Calu3 (cell line): ENCODE measurements at regions of chr1 and their contacts with region 1.

Region 1: GRCh38 chr1:18956369-18957135 is at the start of gene IFFO2:
- DNase-seq: peak; percentile 98
- H3K4me3 Mint-ChIP-seq: peak within 1 kb of the TSS; percentile 77
- H3K27ac Mint-ChIP-seq: peak within 1 kb of the TSS; percentile 79
- H3K4me1 Mint-ChIP-seq: peaks cover 31% of the 10 kb centered on the region
- H3K27me3 Mint-ChIP-seq: peaks cover 12% of the 10 kb centered on the region
- CTCF ChIP-seq: no peak
- total RNA-seq, gene IFFO2: 6.6 and 13.0 TPM in 2 replicates

Region 2: GRCh38 chr1:18814425-18814824 is 142.1 kb before region 1 on chr1:
- CTCF ChIA-PET with region 1: no interaction called
- intact Hi-C with region 1: no loop called
- DNase-seq: no peak
- H3K4me3 Mint-ChIP-seq: no peak overlapping the region
- H3K27ac Mint-ChIP-seq: no peak overlapping the region
- H3K4me1 Mint-ChIP-seq: no peaks in the 10 kb centered on the region
- H3K27me3 Mint-ChIP-seq: peaks cover 90% of the 10 kb centered on the region
- CTCF ChIP-seq: no peak

Region 3: DNA sequence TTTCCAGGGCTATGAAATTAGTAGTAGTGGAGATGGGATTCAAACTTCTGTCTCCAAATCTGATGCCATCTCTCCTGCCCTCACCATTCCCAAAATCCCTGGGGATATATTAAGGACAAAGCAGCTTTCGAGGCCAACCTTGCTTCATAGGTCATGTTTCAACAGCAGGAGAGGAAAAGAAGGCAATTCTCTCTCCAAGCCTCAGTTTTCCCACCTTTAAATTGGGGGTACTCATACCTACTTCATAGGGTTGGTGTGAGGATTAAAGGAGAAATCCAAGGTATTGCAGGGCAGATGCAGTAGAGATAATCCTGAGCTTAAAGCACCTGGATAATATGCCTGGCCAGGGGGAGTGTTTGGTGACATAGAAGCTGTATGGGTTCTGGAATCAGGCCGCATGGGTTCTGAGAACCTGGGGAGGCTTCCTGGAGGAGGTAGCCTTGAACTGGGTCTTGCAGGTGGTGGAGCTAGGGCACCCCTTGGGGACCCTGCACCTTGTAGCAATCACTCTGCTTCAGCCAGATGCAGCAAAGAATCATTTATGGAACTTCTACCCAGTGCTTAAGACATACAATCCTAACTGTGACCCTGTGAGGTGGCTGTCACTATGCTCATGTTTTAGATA is 10.6 kb after region 1 on chr1:
- CTCF ChIA-PET with region 1: interaction called, 11 read pairs
- intact Hi-C with region 1: no loop called
- DNase-seq: no peak
- H3K4me3 Mint-ChIP-seq: no peak overlapping the region
- H3K27ac Mint-ChIP-seq: no peak overlapping the region
- H3K4me1 Mint-ChIP-seq: no peaks in the 10 kb centered on the region
- H3K27me3 Mint-ChIP-seq: peaks cover 19% of the 10 kb centered on the region
- CTCF ChIP-seq: no peak